CD8-positive, alpha-beta memory T cell (primary cell): ENCODE measurements at regions of chr19 and their contacts with region 1.

Region 1: GRCh38 chr19:7799640-7800355 is 30.2 kb upstream of the EVI5L start:
- DNase-seq: peak; percentile 18 to 62 (median 44)
- H3K4me3 ChIP-seq: no peak overlapping the region
- H3K4me3 Mint-ChIP-seq: no peak overlapping the region
- H3K27ac ChIP-seq: no peak overlapping the region
- H3K27ac Mint-ChIP-seq: peak overlapping the region in 2 of 8 donors; percentile 27 to 50
- H3K4me1 ChIP-seq: peaks cover 11% of the 10 kb centered on the region
- H3K4me1 Mint-ChIP-seq: peaks cover 4 to 12% (median 11%) of the 10 kb centered on the region in 3 donors
- H3K27me3 ChIP-seq: peaks cover 11% of the 10 kb centered on the region
- H3K27me3 Mint-ChIP-seq: peaks cover 17 to 42% of the 10 kb centered on the region in 2 donors

Region 2: GRCh38 chr19:7562646-7563393 is 237.0 kb before region 1 on chr19:
- CTCF ChIA-PET with region 1: interaction called, 26 read pairs
- POLR2A ChIA-PET with region 1: interaction called, 6 read pairs
- DNase-seq: no peak
- H3K4me3 ChIP-seq: no peak overlapping the region
- H3K4me3 Mint-ChIP-seq: no peak overlapping the region
- H3K27ac ChIP-seq: no peak overlapping the region
- H3K27ac Mint-ChIP-seq: no peak overlapping the region
- H3K4me1 ChIP-seq: no peaks in the 10 kb centered on the region
- H3K4me1 Mint-ChIP-seq: no peaks in the 10 kb centered on the region
- H3K27me3 ChIP-seq: no peaks in the 10 kb centered on the region
- H3K27me3 Mint-ChIP-seq: no peaks in the 10 kb centered on the region

Region 3: GRCh38 chr19:7652061-7652641 is 147.6 kb before region 1 on chr19:
- CTCF ChIA-PET with region 1: interaction called, 22 read pairs
- POLR2A ChIA-PET with region 1: no interaction called
- DNase-seq: peak; percentile 82 to 89 (median 85)
- H3K4me3 ChIP-seq: peak overlapping the region; percentile 73
- H3K4me3 Mint-ChIP-seq: peak overlapping the region; percentile 45 to 84 (median 76)
- H3K27ac ChIP-seq: peak overlapping the region; percentile 39
- H3K27ac Mint-ChIP-seq: peak overlapping the region; percentile 67 to 99 (median 96)
- H3K4me1 ChIP-seq: peaks cover 8% of the 10 kb centered on the region
- H3K4me1 Mint-ChIP-seq: peaks cover 9 to 12% (median 11%) of the 10 kb centered on the region in 3 donors
- H3K27me3 ChIP-seq: no peaks in the 10 kb centered on the region
- H3K27me3 Mint-ChIP-seq: peaks cover 0 to 5% of the 10 kb centered on the region in 2 donors

Region 4: DNA sequence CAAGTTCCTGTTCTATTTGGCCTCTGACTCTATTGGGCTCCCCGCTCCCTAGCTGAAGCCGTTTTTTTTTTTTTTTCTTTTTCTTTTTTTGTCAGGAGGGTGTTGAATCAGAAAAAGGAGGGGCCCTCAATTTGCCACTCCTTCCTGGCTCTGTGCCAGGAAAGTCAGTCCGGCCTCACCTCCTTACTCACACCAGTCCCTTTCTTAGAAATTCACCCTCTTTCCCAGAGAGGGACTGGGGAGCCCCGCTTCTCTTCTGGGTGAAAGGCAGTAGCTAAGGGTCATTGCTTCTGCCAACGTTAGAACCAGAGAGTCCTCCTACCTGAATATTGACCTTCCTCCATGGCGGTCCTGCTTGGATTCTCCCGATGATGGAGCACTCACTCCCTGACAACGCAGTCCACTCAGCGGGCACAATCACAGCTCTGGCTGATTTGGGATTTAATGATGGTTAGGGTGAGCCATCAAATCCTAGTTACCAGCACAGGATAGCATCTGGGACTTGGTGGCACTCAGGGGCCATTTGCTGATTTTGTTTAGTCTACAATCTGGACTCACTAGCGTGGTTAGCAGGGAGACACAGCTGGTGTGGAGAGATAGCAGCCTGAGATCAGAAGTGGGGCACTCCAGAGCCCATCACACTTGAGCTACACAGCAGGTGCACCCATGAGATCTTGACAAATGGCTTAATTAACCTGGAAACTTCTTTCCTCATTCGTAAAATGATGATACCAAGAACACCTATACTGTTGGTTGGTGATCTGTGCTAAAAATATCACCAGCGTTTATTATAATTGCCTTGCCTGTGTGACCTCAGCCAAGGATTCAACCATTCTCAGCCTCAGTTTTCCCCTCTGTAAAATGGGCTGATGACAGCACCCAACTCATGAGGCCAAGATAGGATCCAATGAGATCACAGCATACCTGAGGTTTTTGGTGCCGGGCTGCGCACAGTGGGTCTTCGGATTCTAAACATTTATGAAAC is 100.1 kb before region 1 on chr19:
- CTCF ChIA-PET with region 1: no interaction called
- POLR2A ChIA-PET with region 1: no interaction called
- DNase-seq: no peak
- H3K4me3 ChIP-seq: no peak overlapping the region
- H3K4me3 Mint-ChIP-seq: no peak overlapping the region
- H3K27ac ChIP-seq: no peak overlapping the region
- H3K27ac Mint-ChIP-seq: peak overlapping the region in 2 of 8 donors; percentile 15 to 77
- H3K4me1 ChIP-seq: peaks cover 9% of the 10 kb centered on the region
- H3K4me1 Mint-ChIP-seq: peaks cover 3 to 18% (median 11%) of the 10 kb centered on the region in 3 donors
- H3K27me3 ChIP-seq: no peaks in the 10 kb centered on the region
- H3K27me3 Mint-ChIP-seq: peaks cover 17 to 23% of the 10 kb centered on the region in 2 donors

Region 5: DNA sequence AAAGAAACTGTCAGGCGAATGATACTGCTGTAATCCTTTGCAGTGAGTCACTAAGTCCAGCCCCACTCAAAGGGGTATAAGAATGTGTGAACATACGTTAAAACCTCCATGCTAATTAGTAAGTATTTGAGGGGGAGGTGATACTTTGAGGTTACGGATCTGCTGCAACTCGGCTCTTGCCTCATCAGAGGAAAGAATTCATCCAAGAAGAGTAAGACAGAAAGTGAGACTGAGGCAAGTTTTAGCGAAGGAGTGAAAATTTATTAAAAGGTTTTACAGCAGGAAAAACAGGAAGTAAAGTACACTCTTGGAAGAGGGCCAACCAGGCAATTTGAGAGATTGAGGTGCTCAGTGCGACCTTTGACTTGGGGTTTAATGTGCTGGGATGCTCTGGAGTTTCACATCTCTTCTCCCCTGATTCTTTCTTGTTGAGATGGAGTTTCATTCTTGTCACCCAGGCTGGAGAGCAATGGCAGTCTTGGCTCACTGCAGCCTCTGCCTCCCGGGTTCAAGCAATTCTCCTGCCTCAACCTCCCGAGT is 27.0 kb before region 1 on chr19:
- CTCF ChIA-PET with region 1: no interaction called
- POLR2A ChIA-PET with region 1: no interaction called
- DNase-seq: no peak
- H3K4me3 ChIP-seq: no peak overlapping the region
- H3K4me3 Mint-ChIP-seq: peak overlapping the region; percentile 4 to 77 (median 61)
- H3K27ac ChIP-seq: no peak overlapping the region
- H3K27ac Mint-ChIP-seq: peak overlapping the region in 7 of 8 donors; percentile 10 to 92 (median 31)
- H3K4me1 ChIP-seq: peaks cover 16% of the 10 kb centered on the region
- H3K4me1 Mint-ChIP-seq: peaks cover 13 to 24% (median 21%) of the 10 kb centered on the region in 3 donors
- H3K27me3 ChIP-seq: no peaks in the 10 kb centered on the region
- H3K27me3 Mint-ChIP-seq: peaks cover 4 to 7% of the 10 kb centered on the region in 2 donors

Region 6: DNA sequence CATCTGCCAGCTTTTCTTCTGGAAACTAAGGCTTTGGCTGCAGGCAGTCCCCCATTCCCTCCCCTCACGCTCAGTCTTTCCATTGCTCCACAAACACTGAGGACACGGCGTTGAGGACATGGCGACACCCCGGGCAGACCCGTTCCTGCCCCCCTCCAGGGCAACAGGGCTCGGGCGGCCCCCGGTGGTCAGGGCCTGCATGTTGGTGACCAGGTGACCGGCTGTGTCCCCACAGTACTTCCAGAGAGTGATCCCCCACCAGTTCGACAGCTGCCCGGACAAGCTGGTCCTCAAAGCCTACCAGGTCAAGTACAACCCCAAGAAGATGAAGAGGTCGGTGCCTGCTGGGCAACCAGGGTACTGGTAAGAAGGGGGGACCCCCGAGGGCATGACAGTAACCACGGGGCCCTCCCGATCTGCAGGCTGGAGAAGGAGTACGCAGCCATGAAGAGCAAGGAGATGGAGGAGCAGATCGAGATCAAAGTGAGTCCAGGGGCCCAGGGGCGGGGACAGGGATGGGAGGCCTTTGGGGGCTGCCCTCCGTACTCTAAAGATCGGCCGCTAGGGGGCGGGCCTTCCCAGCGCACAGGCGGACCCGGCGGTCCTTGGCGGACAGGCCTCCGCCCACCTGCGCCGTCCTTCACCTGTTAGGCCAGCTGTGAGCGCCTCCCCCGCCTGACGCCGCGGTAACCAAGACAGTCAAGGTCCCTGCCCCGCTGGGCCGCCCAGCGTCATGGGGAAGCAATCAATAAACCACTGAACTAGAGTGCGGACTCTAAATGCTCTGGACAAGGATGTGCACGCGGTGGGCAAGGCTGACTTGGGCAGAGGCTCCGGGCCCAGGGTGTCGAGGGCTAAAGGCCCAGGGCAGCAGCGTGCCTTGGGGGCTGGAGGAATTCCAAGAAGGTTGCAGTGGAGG is 53.3 kb after region 1 on chr19:
- CTCF ChIA-PET with region 1: no interaction called
- POLR2A ChIA-PET with region 1: no interaction called
- DNase-seq: peak; percentile 49 to 72 (median 63)
- H3K4me3 ChIP-seq: no peak overlapping the region
- H3K4me3 Mint-ChIP-seq: no peak overlapping the region
- H3K27ac ChIP-seq: no peak overlapping the region
- H3K27ac Mint-ChIP-seq: no peak overlapping the region
- H3K4me1 ChIP-seq: peaks cover 9% of the 10 kb centered on the region
- H3K4me1 Mint-ChIP-seq: peaks cover 0 to 7% (median 0%) of the 10 kb centered on the region in 3 donors
- H3K27me3 ChIP-seq: no peaks in the 10 kb centered on the region
- H3K27me3 Mint-ChIP-seq: peaks cover 3 to 16% of the 10 kb centered on the region in 2 donors